Right ventricle myocardium inferior (tissue), 1 donor: ENCODE measurements at regions of chr2 and their contacts with region 1.

Region 1: GRCh38 chr2:226835796-226836547 is at the start of gene RHBDD1:
- DNase-seq: peak; percentile 97
- ATAC-seq: peak; percentile 99
- total RNA-seq, gene RHBDD1: 30.5 TPM

Region 2: GRCh38 chr2:226703514-226703913 is 132.5 kb before region 1 on chr2:
- intact Hi-C with region 1: no loop called
- DNase-seq: no peak
- ATAC-seq: no peak

Region 3: GRCh38 chr2:226891780-226892590 is 56.0 kb after region 1 on chr2:
- intact Hi-C with region 1: loop called (anchors 10 kb)
- DNase-seq: peak; percentile 59
- ATAC-seq: peak; percentile 77

Region 4: DNA sequence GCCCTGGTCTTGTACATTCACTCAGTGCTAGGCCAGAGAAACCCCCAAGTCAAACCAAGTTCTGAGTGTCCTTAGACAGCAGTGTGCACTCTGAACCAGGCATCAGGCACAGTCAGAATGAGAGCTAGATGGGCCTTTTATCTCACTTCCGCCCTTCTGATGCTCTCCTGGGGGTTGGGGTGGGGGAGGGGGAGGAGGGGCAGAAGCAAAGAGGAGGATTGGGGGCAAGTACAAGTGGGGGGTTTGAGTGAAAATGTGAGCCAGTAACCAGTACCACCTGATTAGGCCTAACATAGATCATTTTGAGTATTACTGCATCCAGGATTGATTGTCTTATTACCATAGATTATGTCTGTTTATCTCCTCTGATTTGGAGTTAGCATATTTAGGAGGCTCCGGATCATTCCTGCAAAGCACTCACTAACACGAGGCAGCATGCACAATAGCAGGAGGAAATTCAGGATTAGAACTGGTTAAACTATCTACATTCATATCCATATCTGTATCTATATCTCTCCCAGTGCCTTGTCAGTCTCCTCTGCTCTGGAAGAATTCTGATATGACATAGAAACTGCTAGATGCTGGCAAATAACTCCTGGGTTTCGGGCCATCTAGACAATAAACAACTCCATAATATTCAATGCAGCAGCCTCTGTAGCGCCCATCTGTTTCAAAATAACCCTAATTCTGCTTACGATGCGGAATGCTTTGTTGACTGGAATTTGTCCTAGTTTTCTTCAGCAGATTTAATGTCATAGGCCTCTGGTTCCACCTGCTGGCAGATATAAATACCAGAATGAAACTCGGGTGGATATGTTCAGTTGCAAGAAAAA is 149.0 kb after region 1 on chr2:
- intact Hi-C with region 1: loop called (anchors 10 kb)
- DNase-seq: no peak
- ATAC-seq: peak; percentile 69